ENCODE measurements at regions of chr11 and their contacts with region 1.

Region 1: DNA sequence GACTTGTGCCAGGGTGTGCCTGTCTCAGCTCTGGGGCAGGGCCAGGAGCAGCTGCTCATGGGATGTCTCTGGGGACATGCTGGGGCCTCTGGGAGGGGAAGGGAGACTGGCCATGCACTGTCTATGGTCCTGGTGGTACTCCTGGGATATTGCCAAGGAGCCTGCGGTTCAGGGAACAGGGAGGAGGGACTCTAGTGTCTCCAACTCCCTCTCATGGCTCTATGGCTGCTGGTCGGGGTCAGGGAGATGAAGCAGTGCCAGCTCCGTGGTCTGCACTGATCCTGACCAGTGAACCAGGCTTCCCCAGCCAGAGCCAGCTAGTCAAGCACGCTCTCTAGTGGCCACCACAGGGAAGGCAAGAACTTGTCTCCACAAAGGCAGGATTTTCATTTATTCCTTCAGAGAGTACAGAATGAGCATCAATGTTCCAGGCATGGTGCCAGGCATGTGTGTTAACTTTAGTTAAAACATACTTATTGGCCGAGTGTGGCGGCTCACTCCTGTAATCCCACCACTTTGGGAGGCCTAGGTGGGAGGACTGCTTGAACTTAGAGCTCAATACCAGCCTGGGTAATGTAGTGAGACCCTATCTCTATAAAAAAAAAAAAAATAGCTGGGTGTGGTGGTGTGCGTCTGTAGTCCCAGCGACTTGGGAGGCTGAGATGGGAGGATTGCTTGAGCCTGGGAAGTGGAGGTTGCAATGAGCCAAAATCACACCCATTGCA is 2.5 kb upstream of the BEST1 start:
- DNase-seq: peak; percentile 96
- H3K4me3 ChIP-seq: no peak overlapping the region
- H3K27ac ChIP-seq: peak overlapping the region in 1 of 2 donors; percentile 74
- H3K4me1 ChIP-seq: peaks cover 36% of the 10 kb centered on the region
- H3K27me3 ChIP-seq: no peaks in the 10 kb centered on the region
- CTCF ChIP-seq: peak; percentile 84 to 96 (median 95)
- POLR2A ChIP-seq: no peak

Region 2: DNA sequence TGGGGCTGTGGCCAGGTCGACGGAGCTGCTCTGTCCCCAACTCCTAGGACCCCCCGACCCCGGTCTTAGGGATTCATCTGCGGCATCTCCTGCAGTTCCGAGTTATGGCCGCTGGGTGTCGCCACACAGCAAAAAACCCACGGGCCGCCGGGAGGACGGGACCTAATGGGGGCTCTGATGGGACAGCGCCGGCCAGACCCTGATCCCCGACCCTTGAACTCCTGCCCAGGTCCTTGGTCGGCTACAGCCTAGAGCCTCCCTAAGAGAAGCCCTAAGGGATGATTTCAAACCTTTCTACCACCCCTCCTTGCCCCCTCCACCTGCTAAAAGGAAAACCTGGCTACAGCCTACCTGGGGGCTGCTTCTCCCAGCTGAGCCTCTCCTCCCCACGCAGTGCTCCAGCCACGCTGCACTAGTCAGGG is 469.9 kb before region 1 on chr11:
- intact Hi-C with region 1: no loop called
- DNase-seq: peak; percentile 76
- H3K4me3 ChIP-seq: no peak overlapping the region
- H3K27ac ChIP-seq: peak overlapping the region in 1 of 2 donors; percentile 29
- H3K4me1 ChIP-seq: peaks cover 16% of the 10 kb centered on the region
- H3K27me3 ChIP-seq: no peaks in the 10 kb centered on the region
- CTCF ChIP-seq: peak; percentile 76 to 95 (median 91)
- POLR2A ChIP-seq: no peak

Region 3: DNA sequence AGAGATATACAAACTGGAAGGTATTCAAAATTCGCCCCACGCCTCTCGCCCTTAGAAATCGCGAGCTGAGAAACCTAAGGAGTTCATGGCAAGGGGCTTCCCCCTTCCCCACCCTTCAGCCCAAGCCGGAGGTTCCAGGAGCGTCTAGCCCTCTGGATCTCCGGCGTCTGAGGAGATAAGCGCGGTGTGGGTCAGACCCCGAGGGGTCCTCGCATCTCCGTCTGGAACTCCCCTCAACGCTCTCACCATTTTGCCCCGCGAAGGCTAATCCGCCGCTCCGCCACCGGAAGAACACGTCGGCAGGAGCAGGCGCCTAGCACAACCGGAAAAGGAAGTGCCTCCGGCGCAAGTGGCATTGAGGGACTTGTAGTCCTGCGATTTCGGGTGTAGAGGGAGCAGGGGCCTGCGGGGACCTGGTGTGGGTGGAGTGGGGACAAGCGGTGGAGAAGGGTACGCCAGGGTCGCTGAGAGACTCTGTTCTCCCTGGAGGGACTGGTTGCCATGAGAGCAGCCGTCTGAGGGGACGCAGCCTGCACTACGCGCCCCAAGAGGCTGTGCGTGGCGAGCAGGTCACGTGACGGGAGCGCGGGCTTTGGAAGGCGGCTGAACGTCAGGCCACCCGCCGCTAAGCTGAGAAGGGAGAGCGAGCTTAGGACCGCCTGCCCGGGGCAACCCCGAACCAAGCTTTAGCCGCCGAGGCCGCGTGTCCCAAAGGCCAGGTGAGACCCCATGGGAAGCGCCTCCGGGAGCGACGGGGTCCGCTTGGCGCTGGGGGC is 155.2 kb before region 1 on chr11 and contains the starts of genes FEN1 and TMEM258:
- intact Hi-C with region 1: loop called (anchors 10 kb)
- DNase-seq: peak; percentile 93
- H3K4me3 ChIP-seq: peak within 1 kb of the TSS; percentile 84 to 97
- H3K27ac ChIP-seq: peak within 1 kb of the TSS; percentile 95 to 98
- H3K4me1 ChIP-seq: peaks cover 17% of the 10 kb centered on the region
- H3K27me3 ChIP-seq: no peaks in the 10 kb centered on the region
- CTCF ChIP-seq: peak in 1 of 3 experiments; percentile 27
- POLR2A ChIP-seq: no peak
- total RNA-seq, gene FEN1: 22.7 to 31.5 TPM
- total RNA-seq, gene TMEM258: 46.7 to 55.6 TPM

Region 4: DNA sequence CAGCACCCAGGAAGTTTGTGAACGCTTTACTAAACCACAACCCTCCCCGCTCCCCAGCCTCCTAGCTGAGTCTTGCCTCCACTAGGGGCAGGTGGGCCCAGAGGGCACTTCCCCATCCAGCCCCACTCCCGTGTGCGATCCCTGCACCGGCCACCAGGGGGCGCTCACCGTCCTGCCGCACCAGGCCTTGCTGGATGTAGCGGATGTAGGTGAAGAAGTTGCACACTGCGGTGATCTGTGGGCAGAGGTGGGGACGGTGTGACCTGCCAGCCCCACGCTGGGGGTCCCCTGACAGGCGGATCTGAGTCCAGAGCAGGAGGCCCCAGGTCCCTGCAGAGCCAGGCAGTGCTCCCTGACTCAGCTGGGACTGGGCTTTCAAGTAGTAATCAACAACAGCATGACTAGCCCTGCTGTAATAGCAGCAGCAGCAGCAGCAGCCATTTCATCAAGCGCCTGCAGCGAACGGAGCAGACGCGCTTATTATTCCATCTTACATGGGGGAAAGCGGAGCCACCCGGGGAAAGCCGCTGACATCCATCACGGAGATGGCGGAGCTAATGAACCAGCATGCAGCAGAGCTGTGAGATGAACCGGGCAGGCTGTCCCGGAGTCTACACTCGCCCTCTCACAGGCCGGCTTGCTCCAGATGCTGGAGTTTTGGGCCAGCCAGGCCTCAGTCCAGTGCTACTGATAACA is 48.4 kb before region 1 on chr11:
- intact Hi-C with region 1: loop called (anchors 2 kb)
- DNase-seq: peak; percentile 86
- H3K4me3 ChIP-seq: no peak overlapping the region
- H3K27ac ChIP-seq: peak overlapping the region; percentile 14 to 62
- H3K4me1 ChIP-seq: peaks cover 28% of the 10 kb centered on the region
- H3K27me3 ChIP-seq: no peaks in the 10 kb centered on the region
- CTCF ChIP-seq: peak; percentile 100
- POLR2A ChIP-seq: no peak

Measured in testis (tissue), 5 donors.